PC-9 (cell line): ENCODE measurements at regions of chr4 and their contacts with region 1.

Region 1: DNA sequence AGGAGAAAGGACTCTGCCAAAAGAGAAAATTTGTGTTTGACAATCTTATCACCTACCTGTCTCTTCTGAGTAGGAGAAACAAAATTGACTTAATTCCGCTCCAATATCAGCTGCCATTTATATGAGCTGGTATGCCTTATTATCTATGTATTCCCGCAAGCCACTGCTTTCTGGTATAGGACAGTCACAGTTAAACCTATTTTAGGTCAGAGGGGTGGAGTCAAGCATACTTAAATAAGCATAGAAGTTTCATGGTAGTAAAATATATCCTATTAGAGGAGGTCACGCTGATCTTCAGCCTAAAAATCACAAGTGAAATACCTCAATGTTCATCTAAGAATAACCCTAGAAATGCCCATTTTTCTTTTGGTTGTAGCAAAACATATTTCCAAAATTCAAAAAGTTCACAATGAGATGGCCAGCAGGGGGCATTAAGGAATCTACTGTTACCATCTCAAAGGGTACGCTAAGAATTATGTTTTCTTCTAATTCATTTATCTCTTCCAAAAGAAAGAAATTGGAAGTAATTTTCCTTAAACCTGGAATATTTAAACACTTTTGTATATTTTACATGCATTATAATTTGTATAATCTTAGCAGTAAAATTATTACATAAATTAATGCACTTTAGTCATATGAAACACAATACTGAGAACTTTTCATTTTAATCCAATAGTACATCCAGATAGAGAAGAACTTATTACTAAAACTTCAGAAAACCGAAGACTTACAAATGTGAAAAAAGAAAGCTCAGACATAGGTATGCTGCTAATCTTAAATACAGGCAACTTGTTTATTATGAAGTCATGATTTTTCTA is 10.5 kb downstream of the PPAT start:
- DNase-seq: no peak
- H3K4me3 ChIP-seq: no peak overlapping the region
- H3K27ac ChIP-seq: no peak overlapping the region
- H3K4me1 ChIP-seq: no peaks in the 10 kb centered on the region
- H3K27me3 ChIP-seq: no peaks in the 10 kb centered on the region
- CTCF ChIP-seq: peak; percentile 69

Region 2: DNA sequence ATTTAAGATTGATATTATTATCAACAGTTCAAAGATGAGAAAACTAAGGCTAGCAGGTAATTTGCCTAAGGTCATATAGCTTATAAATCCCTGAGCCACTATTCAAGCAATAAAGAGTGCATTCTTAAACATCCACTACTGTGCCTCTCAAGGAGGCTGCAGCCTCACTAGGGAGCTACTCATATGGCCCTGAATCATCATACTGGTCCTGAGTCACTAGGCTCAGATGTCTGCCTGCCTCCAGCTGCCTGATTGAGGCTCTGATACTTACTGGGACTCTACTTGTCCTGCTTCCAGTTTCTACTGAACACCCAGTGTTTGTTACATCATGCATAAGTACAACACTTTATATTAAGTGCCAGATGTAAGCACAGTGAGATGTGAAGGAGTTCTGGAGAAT is 148.4 kb before region 1 on chr4:
- CTCF ChIA-PET with region 1: no interaction called
- POLR2A ChIA-PET with region 1: no interaction called
- intact Hi-C with region 1: no loop called
- DNase-seq: no peak
- H3K4me3 ChIP-seq: no peak overlapping the region
- H3K27ac ChIP-seq: no peak overlapping the region
- H3K4me1 ChIP-seq: no peaks in the 10 kb centered on the region
- H3K27me3 ChIP-seq: no peaks in the 10 kb centered on the region
- CTCF ChIP-seq: no peak

Region 3: DNA sequence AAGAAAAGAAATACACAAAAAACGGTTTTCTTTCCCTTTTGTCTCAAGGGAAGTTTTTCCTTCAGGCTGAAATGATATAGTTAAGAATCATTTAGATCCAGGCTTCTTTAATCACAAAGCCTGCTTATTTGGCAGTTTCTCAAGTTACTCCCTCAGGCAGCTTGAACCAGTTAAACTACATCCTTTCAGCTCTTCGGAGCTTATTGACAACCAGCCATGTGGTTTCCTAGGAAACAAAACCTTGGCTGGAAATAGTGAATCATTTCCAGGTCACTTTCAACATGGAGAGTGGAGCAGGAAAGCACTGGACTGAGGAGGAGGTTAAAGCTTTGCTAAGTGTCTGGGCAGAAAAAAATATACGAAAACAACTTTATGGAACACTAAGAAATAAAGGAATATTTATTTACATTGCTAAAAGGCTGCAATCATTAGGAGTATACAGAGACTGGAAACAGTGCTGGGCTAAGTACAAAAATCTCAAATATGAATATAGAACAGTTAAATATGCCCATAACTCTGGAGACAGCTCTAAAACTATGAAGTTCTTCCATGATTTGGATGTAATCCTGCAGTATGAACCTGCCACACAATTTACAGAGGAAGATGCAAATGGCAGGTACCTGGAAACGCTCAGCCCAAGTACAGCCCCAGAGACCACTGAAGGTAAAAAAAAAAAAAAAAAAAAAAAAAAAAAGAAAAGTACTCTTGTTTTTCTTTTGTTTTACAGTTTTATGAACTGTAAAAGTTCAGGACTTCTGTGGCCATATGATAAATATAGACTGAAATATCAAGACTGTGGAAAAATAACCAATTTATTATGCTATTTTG is 14.5 kb before region 1 on chr4:
- CTCF ChIA-PET with region 1: no interaction called
- POLR2A ChIA-PET with region 1: interaction called, 21 read pairs
- intact Hi-C with region 1: no loop called
- DNase-seq: peak; percentile 51 to 93
- H3K4me3 ChIP-seq: peak overlapping the region; percentile 48; the same call in 1 of the 2 replicates
- H3K27ac ChIP-seq: peak overlapping the region; percentile 69
- H3K4me1 ChIP-seq: peaks cover 29% of the 10 kb centered on the region
- H3K27me3 ChIP-seq: no peaks in the 10 kb centered on the region
- CTCF ChIP-seq: no peak

Region 4: GRCh38 chr4:56460085-56460484 is 35.2 kb after region 1 on chr4:
- CTCF ChIA-PET with region 1: no interaction called
- POLR2A ChIA-PET with region 1: no interaction called
- intact Hi-C with region 1: no loop called
- DNase-seq: no peak
- H3K4me3 ChIP-seq: no peak overlapping the region
- H3K27ac ChIP-seq: peak overlapping the region; percentile 47
- H3K4me1 ChIP-seq: peaks cover 3% of the 10 kb centered on the region
- H3K27me3 ChIP-seq: no peaks in the 10 kb centered on the region
- CTCF ChIP-seq: no peak

Region 5: GRCh38 chr4:56544573-56545131 is 119.7 kb after region 1 on chr4:
- CTCF ChIA-PET with region 1: no interaction called
- POLR2A ChIA-PET with region 1: no interaction called
- intact Hi-C with region 1: loop called (anchors 10 kb)
- DNase-seq: peak; percentile 51 to 86
- H3K4me3 ChIP-seq: peak overlapping the region; percentile 57
- H3K27ac ChIP-seq: no peak overlapping the region
- H3K4me1 ChIP-seq: no peaks in the 10 kb centered on the region
- H3K27me3 ChIP-seq: no peaks in the 10 kb centered on the region
- CTCF ChIP-seq: peak; percentile 90